ENCODE measurements at regions of chr20 and their contacts with region 1.

Region 1: DNA sequence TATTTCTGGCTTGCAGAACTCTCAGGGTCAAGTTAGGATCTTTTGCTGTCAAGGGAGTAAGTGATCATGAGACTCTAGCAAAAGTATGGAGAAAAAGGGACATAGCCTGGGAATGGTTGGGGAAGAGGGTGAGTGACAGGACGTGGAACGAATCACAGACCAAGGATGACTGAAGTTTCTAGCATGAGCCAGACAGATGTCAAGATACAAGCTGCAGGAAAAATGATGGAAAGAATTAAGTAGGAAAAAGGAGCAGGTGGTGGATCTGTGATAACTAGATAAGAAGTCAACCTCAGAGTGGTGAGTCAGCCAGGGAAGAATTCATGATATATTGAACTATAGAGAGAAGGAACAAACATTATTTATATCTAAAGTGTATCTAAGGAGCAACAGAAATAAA is 159.8 kb upstream of the SYNDIG1 start:
- DNase-seq: peak; percentile 3
- ATAC-seq: no peak
- H3K4me3 ChIP-seq: no peak overlapping the region
- H3K27ac ChIP-seq: no peak overlapping the region
- H3K4me1 ChIP-seq: no peaks in the 10 kb centered on the region
- H3K27me3 ChIP-seq: no peaks in the 10 kb centered on the region
- CTCF ChIP-seq: no peak
- POLR2A ChIP-seq: no peak
- RAD21 ChIP-seq: no peak

Region 2: DNA sequence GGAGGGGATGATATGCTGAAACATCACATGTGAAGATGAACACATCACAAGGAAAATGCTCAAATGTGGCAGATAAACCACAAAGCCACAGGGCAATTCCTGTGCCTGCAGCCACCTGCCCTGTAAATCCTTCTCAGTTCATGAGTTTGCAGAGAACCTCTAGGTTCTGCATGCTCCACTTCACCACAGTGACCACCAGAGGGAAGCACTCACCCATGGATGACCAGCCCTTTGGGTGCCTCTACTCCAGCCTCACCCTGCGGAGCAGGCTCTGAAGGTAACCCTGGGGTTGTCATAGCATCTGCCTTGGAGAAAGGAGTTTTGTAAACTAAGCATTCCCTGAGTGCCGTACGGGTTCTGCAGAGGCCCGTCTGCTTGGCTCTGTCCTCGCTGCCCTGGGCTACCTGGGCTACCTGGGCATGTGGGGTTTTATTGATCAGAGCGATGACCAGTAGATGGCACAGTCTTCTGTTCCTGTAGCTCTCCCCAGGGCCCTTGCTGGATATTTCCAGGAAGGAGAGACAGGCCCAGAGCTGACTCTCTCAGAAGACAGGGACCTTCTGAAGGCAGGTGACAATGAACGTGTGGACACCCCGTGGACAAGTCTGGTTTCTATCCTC is 527.1 kb before region 1 on chr20:
- CTCF ChIA-PET with region 1: no interaction called
- POLR2A ChIA-PET with region 1: no interaction called
- dilution Hi-C with region 1: no loop called
- in situ Hi-C with region 1: no loop called
- intact Hi-C with region 1: no loop called
- DNase-seq: peak; percentile 2
- ATAC-seq: peak; percentile 44; the same call in 1 of the 2 replicates
- H3K4me3 ChIP-seq: no peak overlapping the region
- H3K27ac ChIP-seq: no peak overlapping the region
- H3K4me1 ChIP-seq: no peaks in the 10 kb centered on the region
- H3K27me3 ChIP-seq: no peaks in the 10 kb centered on the region; the same call in 1 of the 2 replicates
- CTCF ChIP-seq: peak; percentile 46
- POLR2A ChIP-seq: no peak
- RAD21 ChIP-seq: peak; percentile 46

Region 3: GRCh38 chr20:24194137-24194536 is 115.5 kb before region 1 on chr20:
- CTCF ChIA-PET with region 1: no interaction called
- POLR2A ChIA-PET with region 1: no interaction called
- dilution Hi-C with region 1: no loop called
- in situ Hi-C with region 1: no loop called
- intact Hi-C with region 1: no loop called
- DNase-seq: no peak
- ATAC-seq: no peak
- H3K4me3 ChIP-seq: no peak overlapping the region
- H3K27ac ChIP-seq: no peak overlapping the region
- H3K4me1 ChIP-seq: no peaks in the 10 kb centered on the region
- H3K27me3 ChIP-seq: no peaks in the 10 kb centered on the region
- CTCF ChIP-seq: no peak
- POLR2A ChIP-seq: no peak
- RAD21 ChIP-seq: no peak

Region 4: DNA sequence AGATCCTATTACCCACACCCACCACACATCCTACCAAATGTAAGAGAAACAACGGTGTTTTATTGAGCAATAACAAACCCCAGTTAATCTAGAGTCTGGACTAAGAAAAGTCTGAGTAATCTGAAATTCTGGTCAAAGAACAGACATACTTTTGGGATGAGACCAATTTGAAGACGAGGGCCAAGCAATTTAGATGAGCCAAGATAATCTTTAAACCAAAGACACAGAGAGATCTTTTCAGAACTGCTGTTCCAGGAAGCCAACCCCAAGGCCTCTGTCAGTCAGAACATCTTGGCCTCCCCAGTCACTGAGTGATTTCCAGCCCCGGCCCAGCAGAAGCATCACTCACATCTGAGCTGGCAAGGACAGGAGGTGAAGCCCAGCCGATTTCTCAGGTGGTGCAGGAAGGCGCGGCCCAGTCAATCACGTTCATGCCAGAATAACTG is 41.4 kb after region 1 on chr20:
- CTCF ChIA-PET with region 1: no interaction called
- POLR2A ChIA-PET with region 1: no interaction called
- dilution Hi-C with region 1: no loop called
- in situ Hi-C with region 1: no loop called
- intact Hi-C with region 1: loop called (anchors 1 kb)
- DNase-seq: no peak
- ATAC-seq: no peak
- H3K4me3 ChIP-seq: no peak overlapping the region
- H3K27ac ChIP-seq: no peak overlapping the region
- H3K4me1 ChIP-seq: no peaks in the 10 kb centered on the region
- H3K27me3 ChIP-seq: no peaks in the 10 kb centered on the region
- CTCF ChIP-seq: no peak
- POLR2A ChIP-seq: no peak
- RAD21 ChIP-seq: no peak